ENCODE measurements at regions of chr18 and their contacts with region 1.

Region 1: DNA sequence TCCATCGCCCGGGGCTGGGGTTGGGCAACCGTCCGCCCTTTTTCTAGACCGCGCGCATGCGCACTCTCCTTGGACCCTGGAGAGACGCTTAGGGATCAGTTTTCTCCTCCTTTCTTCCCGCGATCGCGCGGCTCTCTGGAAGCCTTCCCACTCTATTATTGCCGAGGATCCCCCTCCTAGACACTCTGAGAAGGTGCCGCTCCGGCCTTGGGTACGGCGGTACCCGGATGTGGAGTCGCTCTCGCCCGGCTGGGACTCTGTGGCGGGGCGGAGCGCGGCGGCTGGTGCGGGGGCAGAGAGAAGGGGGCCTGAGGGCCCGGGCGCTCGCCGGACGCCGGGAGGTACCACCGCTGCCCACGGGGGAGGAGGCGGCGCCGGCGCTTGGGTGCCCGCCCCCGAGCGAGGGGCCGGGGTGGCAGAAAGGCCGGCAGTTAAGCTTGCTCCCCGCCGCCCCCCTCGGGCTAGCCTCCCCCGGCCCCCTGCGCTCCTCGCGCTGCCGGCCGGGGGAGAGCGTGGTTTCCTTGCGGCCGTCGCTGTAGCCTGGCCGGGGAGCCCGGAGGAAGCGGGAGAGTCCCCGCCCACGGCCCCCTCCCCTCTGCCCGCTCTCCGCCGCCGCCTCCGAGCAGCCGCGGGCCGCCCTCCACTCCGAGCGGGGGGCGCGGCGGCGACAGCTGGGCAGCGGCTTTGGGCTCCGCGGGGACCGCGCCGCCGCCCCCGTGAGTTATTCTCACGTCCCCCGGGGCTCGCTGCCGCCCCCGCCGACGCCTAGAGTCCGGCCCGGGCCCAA is at the start of gene MIB1:
- DNase-seq: peak; percentile 55
- H3K4me3 ChIP-seq: peak within 1 kb of the TSS; percentile 66 to 100 (median 88)
- H3K27ac ChIP-seq: peak within 1 kb of the TSS; percentile 96 to 99 (median 98)
- H3K4me1 ChIP-seq: peaks cover 11 to 49% (median 12%) of the 10 kb centered on the region in 3 donors
- H3K27me3 ChIP-seq: no peaks in the 10 kb centered on the region
- CTCF ChIP-seq: no peak
- POLR2A ChIP-seq: peak in 3 of 4 donors; percentile 42 to 81 (median 71)
- total RNA-seq, gene MIB1: 14.1 to 34.9 (median 22.7) TPM

Region 2: GRCh38 chr18:21600526-21601410 is 140.1 kb before region 1 on chr18 and contains the start of gene ESCO1:
- intact Hi-C with region 1: loop called (anchors 10 kb)
- DNase-seq: peak; percentile 73
- H3K4me3 ChIP-seq: peak within 1 kb of the TSS; percentile 74 to 98 (median 85)
- H3K27ac ChIP-seq: peak within 1 kb of the TSS; percentile 97 to 100 (median 98)
- H3K4me1 ChIP-seq: peaks cover 10 to 39% (median 10%) of the 10 kb centered on the region in 3 donors
- H3K27me3 ChIP-seq: no peaks in the 10 kb centered on the region
- CTCF ChIP-seq: peak; percentile 93 to 100 (median 98)
- POLR2A ChIP-seq: peak in 3 of 4 donors; percentile 67 to 95 (median 85)
- total RNA-seq, gene ESCO1: 8.7 to 17.1 (median 14.6) TPM

Region 3: GRCh38 chr18:21915546-21915945 is 174.6 kb after region 1 on chr18:
- intact Hi-C with region 1: no loop called
- DNase-seq: no peak
- H3K4me3 ChIP-seq: no peak overlapping the region
- H3K27ac ChIP-seq: no peak overlapping the region
- H3K4me1 ChIP-seq: no peaks in the 10 kb centered on the region
- H3K27me3 ChIP-seq: no peaks in the 10 kb centered on the region
- CTCF ChIP-seq: no peak
- POLR2A ChIP-seq: no peak